Ovary (tissue), 10 donors: ENCODE measurements at regions of chr1 and their contacts with region 1.

Region 1: DNA sequence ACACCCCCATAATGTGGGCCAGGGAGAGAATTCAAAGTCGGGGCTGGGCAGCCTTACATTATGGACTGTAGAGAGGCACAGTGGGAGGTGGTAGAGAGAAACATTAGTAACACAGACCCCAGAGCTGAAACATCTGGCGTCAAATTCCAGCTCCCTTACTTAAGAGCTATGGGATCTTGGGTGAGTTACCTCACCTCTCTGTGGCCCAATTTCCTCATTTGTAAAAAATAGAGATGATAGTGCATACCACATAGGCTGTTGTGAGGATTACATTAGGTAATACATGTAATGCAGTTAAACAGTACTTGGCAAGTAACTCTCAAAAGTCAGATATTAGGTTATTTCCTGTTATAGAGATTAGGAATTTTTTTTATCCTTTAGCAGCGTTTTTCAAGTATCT is 160.5 kb upstream of the KIAA0040 start:
- DNase-seq: no peak
- H3K4me3 ChIP-seq: no peak overlapping the region
- H3K27ac ChIP-seq: no peak overlapping the region
- H3K4me1 ChIP-seq: no peaks in the 10 kb centered on the region
- H3K27me3 ChIP-seq: no peaks in the 10 kb centered on the region
- CTCF ChIP-seq: no peak
- EP300 ChIP-seq: no peak
- POLR2A ChIP-seq: no peak

Region 2: DNA sequence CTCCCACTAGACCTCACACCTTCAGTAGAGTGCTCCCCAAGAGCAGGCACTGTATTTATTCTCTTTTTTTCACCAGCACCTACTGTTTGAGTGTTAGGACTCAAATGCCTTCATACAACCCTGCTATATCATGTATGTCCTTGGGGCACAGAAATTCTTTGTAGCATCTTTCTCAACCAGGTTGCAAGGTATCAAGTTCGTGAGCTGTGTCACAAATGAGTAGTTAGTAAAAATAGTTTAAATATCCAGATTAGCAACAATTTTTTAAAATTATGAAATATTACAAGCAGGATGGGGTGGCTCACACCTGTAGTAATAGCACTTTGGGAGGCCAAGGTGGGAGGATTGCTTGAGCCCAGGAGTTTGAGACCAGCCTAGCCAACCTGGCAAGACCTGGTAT is 542.9 kb after region 1 on chr1:
- intact Hi-C with region 1: loop called in 1 of 4 experiments (anchors 5 kb)
- DNase-seq: no peak
- H3K4me3 ChIP-seq: no peak overlapping the region
- H3K27ac ChIP-seq: no peak overlapping the region
- H3K4me1 ChIP-seq: no peaks in the 10 kb centered on the region
- H3K27me3 ChIP-seq: no peaks in the 10 kb centered on the region
- CTCF ChIP-seq: no peak
- EP300 ChIP-seq: no peak
- POLR2A ChIP-seq: no peak